AG04450 (cell line): ENCODE measurements at regions of chr17 and their contacts with region 1.

Region 1: GRCh38 chr17:61805399-61805798 is 57.9 kb downstream of the BRIP1 start:
- DNase-seq: peak; percentile 13
- H3K4me3 ChIP-seq: no peak overlapping the region
- H3K27ac ChIP-seq: no peak overlapping the region
- H3K27me3 ChIP-seq: no peaks in the 10 kb centered on the region
- CTCF ChIP-seq: no peak

Region 2: GRCh38 chr17:61783556-61784304 is 21.7 kb before region 1 on chr17:
- CTCF ChIA-PET with region 1: no interaction called
- POLR2A ChIA-PET with region 1: no interaction called
- DNase-seq: no peak
- H3K4me3 ChIP-seq: no peak overlapping the region
- H3K27ac ChIP-seq: no peak overlapping the region
- H3K27me3 ChIP-seq: no peaks in the 10 kb centered on the region
- CTCF ChIP-seq: no peak

Region 3: DNA sequence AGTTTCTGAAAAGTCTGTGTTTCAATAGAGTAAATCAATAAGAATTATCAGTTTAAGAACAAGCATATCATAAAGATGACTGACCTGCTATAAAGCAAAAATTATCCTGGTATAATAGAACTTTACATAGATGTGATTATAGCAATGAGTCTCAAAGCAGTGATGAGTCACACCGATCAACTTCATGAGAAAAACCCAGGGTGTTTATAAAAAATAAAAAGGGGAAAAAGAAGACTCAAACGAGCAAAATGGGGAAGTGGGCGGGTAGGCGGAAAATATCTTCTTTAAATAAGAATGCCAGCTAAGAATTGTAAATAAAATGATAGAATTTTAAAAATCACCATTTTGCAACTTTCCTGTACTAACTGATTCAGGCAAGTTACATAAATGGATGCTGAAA is 11.1 kb after region 1 on chr17:
- CTCF ChIA-PET with region 1: no interaction called
- POLR2A ChIA-PET with region 1: no interaction called
- DNase-seq: no peak
- H3K4me3 ChIP-seq: no peak overlapping the region
- H3K27ac ChIP-seq: no peak overlapping the region
- H3K27me3 ChIP-seq: no peaks in the 10 kb centered on the region
- CTCF ChIP-seq: no peak

Region 4: DNA sequence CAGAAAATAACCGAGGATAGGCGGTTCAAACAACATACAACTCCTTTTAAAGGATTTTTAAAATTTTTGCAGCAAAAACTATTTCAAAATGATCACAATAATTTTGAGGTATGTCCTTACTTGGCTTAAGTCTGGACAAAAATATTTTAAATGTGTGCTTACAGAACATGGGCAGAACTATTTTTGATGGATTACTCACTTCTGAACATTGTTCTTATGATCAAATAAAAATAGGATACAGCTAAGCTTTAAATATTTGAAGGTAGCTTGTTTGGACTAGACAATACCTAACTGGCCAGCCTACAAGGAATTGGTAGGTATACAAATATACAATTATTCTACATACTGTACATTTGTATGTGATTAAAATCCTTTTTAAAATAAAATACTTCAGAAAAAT is 136.7 kb after region 1 on chr17:
- CTCF ChIA-PET with region 1: no interaction called
- POLR2A ChIA-PET with region 1: interaction called, 10 read pairs
- DNase-seq: no peak
- H3K4me3 ChIP-seq: no peak overlapping the region
- H3K27ac ChIP-seq: no peak overlapping the region
- H3K27me3 ChIP-seq: no peaks in the 10 kb centered on the region
- CTCF ChIP-seq: no peak